WTC11 (cell line): ENCODE measurements at regions of chr17 and their contacts with region 1.

Region 1: GRCh38 chr17:19338031-19338990 is 24.2 kb downstream of the B9D1 start:
- DNase-seq: peak; percentile 76
- ATAC-seq: peak; percentile 62
- H3K4me3 Mint-ChIP-seq: 0 out of 2 replicates have a peak overlapping the region, but pooled peaks have one; percentile 12
- H3K27ac Mint-ChIP-seq: peak overlapping the region; percentile 95
- H3K4me1 Mint-ChIP-seq: peaks cover 46% of the 10 kb centered on the region
- H3K27me3 Mint-ChIP-seq: no peaks in the 10 kb centered on the region
- CTCF ChIP-seq: 0 out of 2 replicates have a peak, but pooled peaks have one; percentile 22

Region 2: DNA sequence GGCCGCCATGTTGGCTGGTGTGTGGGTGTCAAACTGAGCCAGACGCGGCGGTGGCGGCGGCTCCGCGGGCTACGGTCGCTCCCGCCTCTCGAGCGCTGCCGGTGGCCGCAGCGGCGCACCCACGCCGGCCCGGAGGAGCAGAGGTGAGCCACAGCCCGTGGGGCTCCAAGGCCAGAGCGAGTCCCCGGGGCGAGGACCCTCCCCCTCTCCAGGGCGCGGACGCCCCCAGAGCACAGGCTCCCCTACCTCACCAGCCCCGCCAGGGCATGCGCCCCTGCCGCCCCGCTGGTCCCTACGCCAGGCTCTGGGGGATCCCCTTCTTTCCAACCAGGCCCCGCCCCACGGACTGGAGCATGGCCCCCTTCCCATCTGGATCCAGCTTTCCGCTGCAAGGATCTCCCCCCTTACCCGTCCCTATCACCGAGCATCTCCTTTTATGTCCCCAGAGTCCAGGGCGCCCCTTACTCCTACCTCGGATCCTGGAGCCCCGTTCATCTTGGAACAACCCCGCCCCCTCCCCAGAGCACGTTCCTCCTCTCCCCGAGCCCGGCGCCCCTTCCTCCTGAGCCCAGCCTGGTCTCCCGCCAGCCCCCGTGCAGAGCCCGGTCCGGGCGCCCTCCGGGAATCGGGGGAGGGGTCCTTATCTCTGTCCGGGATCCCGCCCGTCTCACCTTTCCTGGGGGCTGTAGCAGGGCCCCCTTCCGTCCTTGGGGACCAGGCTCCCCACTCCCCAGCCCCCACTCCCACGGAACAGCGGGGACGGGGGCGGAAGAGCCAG is 100.7 kb before region 1 on chr17:
- CTCF ChIA-PET with region 1: interaction called, 16 read pairs
- POLR2A ChIA-PET with region 1: no interaction called
- DNase-seq: peak; percentile 62
- ATAC-seq: peak; percentile 58
- H3K4me3 Mint-ChIP-seq: peak overlapping the region; percentile 86
- H3K27ac Mint-ChIP-seq: peak overlapping the region; percentile 82; the same call in 1 of the 2 replicates
- H3K4me1 Mint-ChIP-seq: peaks cover 27% of the 10 kb centered on the region
- H3K27me3 Mint-ChIP-seq: no peaks in the 10 kb centered on the region
- CTCF ChIP-seq: 0 out of 2 replicates have a peak, but pooled peaks have one; percentile 26

Region 3: DNA sequence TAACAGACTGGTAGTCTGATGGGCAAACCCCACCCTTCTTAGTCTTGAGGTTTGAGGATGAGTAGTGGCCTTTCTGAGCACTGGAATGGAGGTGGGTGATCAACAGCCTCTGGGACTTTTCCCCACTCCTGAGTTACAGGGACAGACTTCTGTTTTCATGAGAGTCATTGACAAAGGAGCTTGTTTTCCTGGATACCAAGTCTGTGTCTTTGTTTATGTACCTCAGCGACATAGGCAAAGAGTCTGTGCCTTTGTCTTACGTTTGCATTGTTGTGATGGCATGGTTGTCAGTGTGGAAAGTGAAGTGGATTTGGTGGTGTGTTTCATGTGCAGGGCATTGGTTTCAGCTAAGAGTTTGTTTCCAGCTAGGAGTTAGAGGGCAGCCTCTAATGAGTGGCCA is 83.7 kb before region 1 on chr17:
- CTCF ChIA-PET with region 1: interaction called, 18 read pairs
- POLR2A ChIA-PET with region 1: no interaction called
- DNase-seq: no peak
- ATAC-seq: no peak
- H3K4me3 Mint-ChIP-seq: no peak overlapping the region
- H3K27ac Mint-ChIP-seq: peak overlapping the region; percentile 0; the same call in 1 of the 2 replicates
- H3K4me1 Mint-ChIP-seq: peaks cover 21% of the 10 kb centered on the region
- H3K27me3 Mint-ChIP-seq: no peaks in the 10 kb centered on the region
- CTCF ChIP-seq: no peak

Region 4: GRCh38 chr17:19284005-19284959 is 54.0 kb before region 1 on chr17:
- CTCF ChIA-PET with region 1: interaction called, 14 read pairs
- POLR2A ChIA-PET with region 1: no interaction called
- DNase-seq: no peak
- ATAC-seq: no peak
- H3K4me3 Mint-ChIP-seq: no peak overlapping the region
- H3K27ac Mint-ChIP-seq: peak overlapping the region; percentile 35
- H3K4me1 Mint-ChIP-seq: peaks cover 65% of the 10 kb centered on the region
- H3K27me3 Mint-ChIP-seq: no peaks in the 10 kb centered on the region
- CTCF ChIP-seq: no peak

Region 5: GRCh38 chr17:19321481-19322128 is 16.7 kb before region 1 on chr17:
- CTCF ChIA-PET with region 1: interaction called, 71 read pairs
- POLR2A ChIA-PET with region 1: no interaction called
- DNase-seq: peak; percentile 38
- ATAC-seq: peak; percentile 25
- H3K4me3 Mint-ChIP-seq: no peak overlapping the region
- H3K27ac Mint-ChIP-seq: peak overlapping the region; percentile 12
- H3K4me1 Mint-ChIP-seq: peaks cover 23% of the 10 kb centered on the region
- H3K27me3 Mint-ChIP-seq: no peaks in the 10 kb centered on the region
- CTCF ChIP-seq: peak; percentile 43; the same call in 1 of the 2 replicates

Region 6: GRCh38 chr17:19377602-19378392 is 39.5 kb after region 1 on chr17:
- CTCF ChIA-PET with region 1: interaction called, 26 read pairs
- POLR2A ChIA-PET with region 1: interaction called, 3 read pairs
- DNase-seq: peak; percentile 99
- ATAC-seq: peak; percentile 93
- H3K4me3 Mint-ChIP-seq: peak overlapping the region; percentile 99
- H3K27ac Mint-ChIP-seq: peak overlapping the region; percentile 97
- H3K4me1 Mint-ChIP-seq: peaks cover 16% of the 10 kb centered on the region
- H3K27me3 Mint-ChIP-seq: no peaks in the 10 kb centered on the region
- CTCF ChIP-seq: no peak

Region 7: GRCh38 chr17:19424934-19425868 is 86.9 kb after region 1 on chr17:
- CTCF ChIA-PET with region 1: no interaction called
- POLR2A ChIA-PET with region 1: no interaction called
- DNase-seq: no peak
- ATAC-seq: no peak
- H3K4me3 Mint-ChIP-seq: no peak overlapping the region
- H3K27ac Mint-ChIP-seq: no peak overlapping the region
- H3K4me1 Mint-ChIP-seq: peaks cover 31% of the 10 kb centered on the region
- H3K27me3 Mint-ChIP-seq: no peaks in the 10 kb centered on the region
- CTCF ChIP-seq: no peak